ENCODE measurements at regions of chr3 and their contacts with region 1.

Region 1: GRCh38 chr3:155805802-155806618 is at the start of gene C3orf33:
- DNase-seq: peak; percentile 73
- H3K4me3 ChIP-seq: peak within 1 kb of the TSS; percentile 75 to 93 (median 84)
- H3K27ac ChIP-seq: peak within 1 kb of the TSS; percentile 55
- H3K4me1 ChIP-seq: peaks cover 6% of the 10 kb centered on the region
- H3K27me3 ChIP-seq: no peaks in the 10 kb centered on the region
- CTCF ChIP-seq: peak; percentile 88 to 89
- POLR2A ChIP-seq: peak; percentile 22
- total RNA-seq, gene C3orf33: 0.74 and 1.7 TPM in 2 replicates

Region 2: DNA sequence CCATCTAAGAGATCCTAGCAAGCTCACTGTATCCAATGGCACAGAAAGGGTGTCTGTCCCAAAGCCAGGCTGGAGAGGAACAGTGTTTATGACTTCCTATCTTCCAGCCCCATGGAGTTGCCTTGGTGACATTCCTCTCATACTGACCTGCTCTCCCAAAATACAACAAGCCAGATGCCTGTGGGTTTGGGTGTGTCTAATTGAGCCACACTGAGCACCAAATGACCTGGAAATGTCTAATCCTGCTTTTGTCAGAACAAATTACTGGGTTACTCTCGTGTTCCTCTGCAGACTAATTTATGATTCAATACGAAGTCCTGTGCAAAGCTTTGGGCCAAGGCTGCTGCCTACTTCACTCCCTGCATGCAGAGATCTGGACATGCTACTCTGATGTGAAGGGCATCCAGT is 414.5 kb before region 1 on chr3:
- CTCF ChIA-PET with region 1: no interaction called
- POLR2A ChIA-PET with region 1: no interaction called
- dilution Hi-C with region 1: no loop called
- intact Hi-C with region 1: no loop called
- DNase-seq: no peak
- H3K4me3 ChIP-seq: no peak overlapping the region
- H3K27ac ChIP-seq: no peak overlapping the region
- H3K4me1 ChIP-seq: no peaks in the 10 kb centered on the region
- H3K27me3 ChIP-seq: no peaks in the 10 kb centered on the region
- CTCF ChIP-seq: no peak
- POLR2A ChIP-seq: no peak

Region 3: DNA sequence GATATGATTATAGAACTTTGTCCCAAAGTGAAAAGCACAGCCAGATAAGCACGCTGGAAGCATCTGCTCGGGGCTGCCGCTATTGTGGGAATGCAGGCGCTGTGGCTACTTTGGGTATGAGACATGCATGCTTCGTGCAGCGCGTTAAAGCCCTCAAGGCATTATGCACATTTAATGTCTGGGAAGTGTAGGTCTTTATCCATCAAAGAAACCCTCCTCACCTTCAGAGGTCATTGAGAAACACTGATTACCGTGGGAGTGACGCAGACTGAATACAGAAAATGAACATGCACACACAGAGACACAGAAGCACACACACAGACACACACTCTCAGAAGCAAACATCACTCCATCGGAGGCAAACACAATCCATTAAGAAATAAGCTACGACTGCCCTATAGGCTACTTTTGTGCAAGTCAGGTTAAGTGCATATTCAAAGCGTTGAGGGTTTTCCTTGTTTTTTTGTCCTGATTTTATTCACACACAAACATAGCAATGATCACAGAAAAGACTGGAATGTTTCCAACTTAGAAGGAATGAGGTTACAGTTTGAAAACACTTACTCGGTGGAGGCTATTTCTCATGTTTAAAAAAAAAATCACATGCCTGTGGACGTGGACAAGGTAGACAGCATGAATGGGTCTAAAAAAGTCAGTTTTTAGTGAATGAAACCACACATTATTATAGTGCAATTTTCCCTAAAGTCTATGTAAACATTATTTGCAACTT is 129.6 kb before region 1 on chr3:
- CTCF ChIA-PET with region 1: no interaction called
- POLR2A ChIA-PET with region 1: no interaction called
- dilution Hi-C with region 1: no loop called
- intact Hi-C with region 1: no loop called
- DNase-seq: no peak
- H3K4me3 ChIP-seq: no peak overlapping the region
- H3K27ac ChIP-seq: no peak overlapping the region
- H3K4me1 ChIP-seq: no peaks in the 10 kb centered on the region
- H3K27me3 ChIP-seq: no peaks in the 10 kb centered on the region
- CTCF ChIP-seq: no peak
- POLR2A ChIP-seq: no peak

Region 4: DNA sequence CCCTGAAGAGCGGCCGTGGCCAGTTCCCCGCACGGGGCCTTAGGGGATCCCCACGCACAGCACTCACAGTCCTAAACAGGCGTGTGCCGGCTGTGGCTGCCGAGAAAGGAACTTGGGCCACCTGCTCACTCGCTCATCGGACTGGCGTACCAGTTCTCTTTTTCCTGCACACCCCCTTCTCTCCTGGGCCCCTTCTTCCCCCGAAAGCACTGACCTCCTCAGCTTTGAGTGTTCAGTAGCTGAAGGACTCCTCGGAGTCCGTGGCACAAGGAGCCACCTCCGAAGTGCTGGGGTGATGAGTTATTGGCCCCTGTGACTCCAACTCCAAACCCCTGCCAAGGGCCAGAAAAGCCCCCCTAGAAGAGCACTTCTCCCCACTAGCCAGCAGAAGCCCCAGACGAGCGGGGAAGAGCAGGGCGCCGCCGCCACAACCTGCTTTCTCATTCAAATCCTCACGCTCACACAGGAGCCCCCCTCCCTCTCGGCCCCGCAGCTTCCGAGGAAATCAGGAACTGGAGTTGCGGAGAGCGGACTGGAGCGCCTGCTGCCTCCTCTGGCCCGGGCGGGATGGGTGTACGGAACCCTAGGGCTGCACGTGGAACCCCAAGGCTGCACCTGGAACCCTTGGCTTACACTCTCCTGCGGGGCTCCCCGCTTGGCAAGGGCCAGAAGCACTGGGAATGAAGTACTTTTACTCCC is 61.2 kb before region 1 on chr3 and contains the start of gene PLCH1:
- CTCF ChIA-PET with region 1: interaction called, 6 read pairs
- POLR2A ChIA-PET with region 1: no interaction called
- dilution Hi-C with region 1: no loop called
- intact Hi-C with region 1: loop called (anchors 2 kb)
- DNase-seq: peak; percentile 52
- H3K4me3 ChIP-seq: peak within 1 kb of the TSS; percentile 34 to 64 (median 42)
- H3K27ac ChIP-seq: no peak within 1 kb of the TSS
- H3K4me1 ChIP-seq: peaks cover 7% of the 10 kb centered on the region
- H3K27me3 ChIP-seq: peaks cover 27 to 45% of the 10 kb centered on the region in 2 experiments
- CTCF ChIP-seq: no peak
- POLR2A ChIP-seq: no peak
- total RNA-seq, gene PLCH1: not detected in 2 replicates

Region 5: DNA sequence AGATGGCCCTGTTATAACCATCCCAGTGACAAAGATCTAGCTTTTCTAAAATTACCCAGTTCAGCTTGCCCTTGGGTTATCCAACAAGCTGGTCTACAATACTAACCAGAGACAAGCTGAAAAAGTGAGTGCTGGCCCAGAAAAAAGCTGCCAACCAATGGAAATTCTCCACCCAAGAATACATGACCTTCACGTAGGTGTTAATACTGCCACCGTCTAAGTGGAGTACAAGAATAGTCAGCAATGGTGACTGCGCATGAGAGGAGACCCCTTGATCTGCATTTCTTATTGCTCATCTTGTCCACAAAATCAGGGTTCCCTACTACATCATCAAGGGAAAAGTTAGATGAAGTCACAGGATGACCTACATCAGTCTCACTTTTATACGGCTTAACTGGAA is 45.4 kb before region 1 on chr3:
- CTCF ChIA-PET with region 1: interaction called, 11 read pairs
- POLR2A ChIA-PET with region 1: no interaction called
- dilution Hi-C with region 1: no loop called
- intact Hi-C with region 1: no loop called
- DNase-seq: no peak
- H3K4me3 ChIP-seq: no peak overlapping the region
- H3K27ac ChIP-seq: no peak overlapping the region
- H3K4me1 ChIP-seq: no peaks in the 10 kb centered on the region
- H3K27me3 ChIP-seq: no peaks in the 10 kb centered on the region
- CTCF ChIP-seq: no peak
- POLR2A ChIP-seq: no peak

Region 6: DNA sequence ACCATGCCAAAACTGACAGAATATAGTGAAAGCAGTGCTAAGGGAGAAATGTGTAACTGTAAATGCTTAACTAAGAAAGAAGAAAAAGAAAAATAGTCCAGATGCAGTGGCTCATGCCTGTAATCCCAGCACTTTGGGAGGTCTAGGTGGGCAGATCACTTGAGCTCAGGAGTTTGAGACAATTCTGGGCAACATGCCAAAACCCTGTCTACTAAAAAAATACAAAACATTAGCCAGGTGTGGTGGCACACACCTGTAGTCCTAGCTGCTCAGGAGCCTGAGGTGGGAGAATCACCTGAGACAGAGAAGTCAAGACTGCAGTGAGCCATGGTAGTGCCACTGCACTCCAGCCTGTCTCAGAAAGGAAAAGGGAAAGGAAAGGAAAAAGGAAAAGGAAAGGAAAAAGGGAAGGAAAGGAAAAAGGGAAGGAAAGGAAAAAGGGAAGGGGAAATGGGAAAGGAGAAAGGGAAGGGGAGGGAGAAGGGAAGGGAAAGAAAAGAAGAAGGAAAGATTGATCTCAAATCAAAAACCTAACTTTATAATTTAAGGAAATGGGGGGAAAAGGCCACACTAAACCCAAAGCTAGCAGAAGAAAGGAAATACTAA is 20.2 kb before region 1 on chr3:
- CTCF ChIA-PET with region 1: interaction called, 17 read pairs
- POLR2A ChIA-PET with region 1: no interaction called
- dilution Hi-C with region 1: no loop called
- intact Hi-C with region 1: no loop called
- DNase-seq: no peak
- H3K4me3 ChIP-seq: no peak overlapping the region
- H3K27ac ChIP-seq: no peak overlapping the region
- H3K4me1 ChIP-seq: no peaks in the 10 kb centered on the region
- H3K27me3 ChIP-seq: no peaks in the 10 kb centered on the region
- CTCF ChIP-seq: no peak
- POLR2A ChIP-seq: no peak

Region 7: DNA sequence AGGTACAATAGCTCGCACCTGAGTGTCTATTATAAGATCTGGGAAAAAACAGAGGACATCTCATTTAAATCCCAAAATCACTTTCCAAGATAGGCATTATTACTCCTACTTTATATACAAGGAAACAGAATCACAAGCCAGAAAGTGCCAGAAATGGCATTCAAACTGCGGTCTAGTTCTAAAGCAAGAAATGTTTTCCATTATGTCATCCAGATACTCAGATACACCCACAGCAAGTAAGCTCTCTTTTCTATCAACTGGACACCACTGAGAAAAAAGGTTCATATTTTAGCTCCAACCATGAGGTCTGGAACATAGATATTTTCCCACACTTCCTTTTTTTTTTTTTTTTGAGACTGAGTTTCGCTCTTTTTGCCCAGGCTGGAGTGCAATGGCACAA is 40.1 kb after region 1 on chr3:
- CTCF ChIA-PET with region 1: interaction called, 34 read pairs
- POLR2A ChIA-PET with region 1: no interaction called
- dilution Hi-C with region 1: no loop called
- intact Hi-C with region 1: no loop called
- DNase-seq: no peak
- H3K4me3 ChIP-seq: no peak overlapping the region
- H3K27ac ChIP-seq: no peak overlapping the region
- H3K4me1 ChIP-seq: no peaks in the 10 kb centered on the region
- H3K27me3 ChIP-seq: no peaks in the 10 kb centered on the region
- CTCF ChIP-seq: no peak
- POLR2A ChIP-seq: no peak

Region 8: DNA sequence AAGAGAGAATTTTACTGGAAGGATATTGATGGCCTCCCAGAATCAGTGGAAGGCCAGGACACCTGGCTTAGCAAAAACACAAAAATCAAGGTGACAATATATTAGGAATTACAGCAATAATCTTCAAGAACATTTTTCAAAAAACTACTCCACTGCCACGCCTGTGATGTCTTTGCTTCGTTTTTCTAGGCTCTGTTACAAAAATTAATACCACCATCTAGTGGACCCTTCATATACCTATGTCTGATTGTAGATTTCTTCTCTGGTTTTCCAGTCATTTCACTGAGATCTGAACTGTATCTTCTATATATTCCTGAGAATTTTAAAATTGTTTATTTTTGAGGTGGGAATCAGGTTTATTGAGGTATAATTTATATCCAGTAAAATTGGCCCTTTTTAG is 53.8 kb after region 1 on chr3:
- CTCF ChIA-PET with region 1: interaction called, 14 read pairs
- POLR2A ChIA-PET with region 1: no interaction called
- dilution Hi-C with region 1: no loop called
- intact Hi-C with region 1: no loop called
- DNase-seq: peak; percentile 38
- H3K4me3 ChIP-seq: no peak overlapping the region
- H3K27ac ChIP-seq: no peak overlapping the region
- H3K4me1 ChIP-seq: no peaks in the 10 kb centered on the region
- H3K27me3 ChIP-seq: no peaks in the 10 kb centered on the region
- CTCF ChIP-seq: peak; percentile 3 to 10
- POLR2A ChIP-seq: no peak

Region 9: DNA sequence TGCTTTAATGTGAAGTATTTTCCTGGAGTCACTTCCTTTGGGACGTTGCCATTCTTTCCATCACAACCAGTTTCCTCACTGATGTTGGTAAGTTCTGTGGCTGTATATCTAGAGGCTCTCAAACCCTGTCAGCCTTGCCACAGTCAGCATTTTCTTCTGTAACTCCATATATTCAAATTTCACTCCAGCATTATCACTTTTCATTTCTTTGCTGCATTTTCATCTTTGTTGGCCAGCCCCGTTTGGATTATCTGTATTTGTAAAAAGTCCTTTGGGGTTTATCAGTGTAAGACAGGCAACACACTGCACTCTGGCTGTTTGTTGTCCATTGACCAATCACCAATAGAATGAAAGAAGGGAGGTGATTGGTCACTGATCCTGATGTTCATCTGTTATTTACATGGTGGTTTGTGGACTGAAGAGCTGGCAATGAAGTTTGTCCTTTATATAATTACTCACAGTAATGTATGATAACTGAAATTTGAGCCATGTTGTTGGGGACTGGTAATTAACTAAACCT is 84.7 kb after region 1 on chr3:
- CTCF ChIA-PET with region 1: interaction called, 11 read pairs
- POLR2A ChIA-PET with region 1: no interaction called
- dilution Hi-C with region 1: no loop called
- intact Hi-C with region 1: loop called (anchors 5 kb)
- DNase-seq: peak; percentile 85
- H3K4me3 ChIP-seq: no peak overlapping the region
- H3K27ac ChIP-seq: peak overlapping the region; percentile 12
- H3K4me1 ChIP-seq: peaks cover 13% of the 10 kb centered on the region
- H3K27me3 ChIP-seq: no peaks in the 10 kb centered on the region
- CTCF ChIP-seq: no peak
- POLR2A ChIP-seq: no peak

Region 10: DNA sequence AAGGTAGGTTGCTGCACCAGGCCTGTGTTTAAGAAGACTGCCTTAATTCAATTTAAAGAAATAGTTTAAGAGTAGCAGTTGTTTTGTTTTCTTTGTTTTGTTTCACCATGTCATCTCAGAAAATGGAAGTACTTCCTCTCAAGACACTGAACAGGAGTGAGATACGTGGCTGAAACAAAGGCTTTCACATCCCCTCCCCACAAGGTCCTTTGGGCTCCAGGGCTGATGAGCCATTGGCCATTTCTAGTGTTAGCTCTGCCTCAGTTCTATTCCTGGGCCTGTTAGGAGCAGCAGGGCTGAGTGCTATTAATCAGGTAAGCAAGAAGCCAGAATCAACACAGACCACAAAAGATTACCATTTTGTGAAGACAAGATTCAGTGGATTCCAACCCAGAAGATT is 447.1 kb after region 1 on chr3:
- CTCF ChIA-PET with region 1: no interaction called
- POLR2A ChIA-PET with region 1: no interaction called
- dilution Hi-C with region 1: no loop called
- intact Hi-C with region 1: no loop called
- DNase-seq: no peak
- H3K4me3 ChIP-seq: no peak overlapping the region
- H3K27ac ChIP-seq: no peak overlapping the region
- H3K4me1 ChIP-seq: peaks cover 5% of the 10 kb centered on the region
- H3K27me3 ChIP-seq: no peaks in the 10 kb centered on the region
- CTCF ChIP-seq: no peak
- POLR2A ChIP-seq: no peak